ENCODE measurements at regions of chr6 and their contacts with region 1.

Region 1: GRCh38 chr6:2988426-2989331 is 11.0 kb upstream of the NQO2 start:
- DNase-seq: peak; percentile 76 to 78 (median 77)
- H3K4me3 ChIP-seq: peak overlapping the region; percentile 52 to 66
- H3K4me3 Mint-ChIP-seq: peak overlapping the region; percentile 92 to 98 (median 98)
- H3K27ac ChIP-seq: peak overlapping the region; percentile 92
- H3K27ac Mint-ChIP-seq: peak overlapping the region; percentile 99 to 100 (median 100)
- H3K4me1 ChIP-seq: peaks cover 26% of the 10 kb centered on the region
- H3K4me1 Mint-ChIP-seq: peaks cover 19 to 37% (median 27%) of the 10 kb centered on the region in 4 donors
- H3K27me3 ChIP-seq: no peaks in the 10 kb centered on the region
- H3K27me3 Mint-ChIP-seq: no peaks in the 10 kb centered on the region

Region 2: GRCh38 chr6:2841264-2842138 is 147.2 kb before region 1 on chr6 and contains the start of gene SERPINB1:
- CTCF ChIA-PET with region 1: interaction called, 59 read pairs
- POLR2A ChIA-PET with region 1: interaction called, 70 read pairs
- intact Hi-C with region 1: loop called (anchors 1 kb)
- DNase-seq: peak; percentile 64 to 73 (median 68)
- H3K4me3 ChIP-seq: peak within 1 kb of the TSS; percentile 49 to 58
- H3K4me3 Mint-ChIP-seq: peak within 1 kb of the TSS; percentile 89 to 96 (median 93)
- H3K27ac ChIP-seq: peak within 1 kb of the TSS; percentile 73
- H3K27ac Mint-ChIP-seq: peak within 1 kb of the TSS; percentile 93 to 98 (median 95)
- H3K4me1 ChIP-seq: peaks cover 46% of the 10 kb centered on the region
- H3K4me1 Mint-ChIP-seq: peaks cover 39 to 63% (median 51%) of the 10 kb centered on the region in 4 donors
- H3K27me3 ChIP-seq: no peaks in the 10 kb centered on the region
- H3K27me3 Mint-ChIP-seq: no peaks in the 10 kb centered on the region
- total RNA-seq, gene SERPINB1: 56.7 to 58.0 TPM

Region 3: GRCh38 chr6:2911171-2911570 is 77.5 kb before region 1 on chr6:
- CTCF ChIA-PET with region 1: interaction called, 6 read pairs
- POLR2A ChIA-PET with region 1: interaction called, 12 read pairs
- intact Hi-C with region 1: no loop called
- DNase-seq: no peak
- H3K4me3 ChIP-seq: no peak overlapping the region
- H3K4me3 Mint-ChIP-seq: no peak overlapping the region
- H3K27ac ChIP-seq: no peak overlapping the region
- H3K27ac Mint-ChIP-seq: no peak overlapping the region
- H3K4me1 ChIP-seq: peaks cover 6% of the 10 kb centered on the region
- H3K4me1 Mint-ChIP-seq: peaks cover 15 to 31% (median 22%) of the 10 kb centered on the region in 4 donors
- H3K27me3 ChIP-seq: no peaks in the 10 kb centered on the region
- H3K27me3 Mint-ChIP-seq: no peaks in the 10 kb centered on the region

Region 4: DNA sequence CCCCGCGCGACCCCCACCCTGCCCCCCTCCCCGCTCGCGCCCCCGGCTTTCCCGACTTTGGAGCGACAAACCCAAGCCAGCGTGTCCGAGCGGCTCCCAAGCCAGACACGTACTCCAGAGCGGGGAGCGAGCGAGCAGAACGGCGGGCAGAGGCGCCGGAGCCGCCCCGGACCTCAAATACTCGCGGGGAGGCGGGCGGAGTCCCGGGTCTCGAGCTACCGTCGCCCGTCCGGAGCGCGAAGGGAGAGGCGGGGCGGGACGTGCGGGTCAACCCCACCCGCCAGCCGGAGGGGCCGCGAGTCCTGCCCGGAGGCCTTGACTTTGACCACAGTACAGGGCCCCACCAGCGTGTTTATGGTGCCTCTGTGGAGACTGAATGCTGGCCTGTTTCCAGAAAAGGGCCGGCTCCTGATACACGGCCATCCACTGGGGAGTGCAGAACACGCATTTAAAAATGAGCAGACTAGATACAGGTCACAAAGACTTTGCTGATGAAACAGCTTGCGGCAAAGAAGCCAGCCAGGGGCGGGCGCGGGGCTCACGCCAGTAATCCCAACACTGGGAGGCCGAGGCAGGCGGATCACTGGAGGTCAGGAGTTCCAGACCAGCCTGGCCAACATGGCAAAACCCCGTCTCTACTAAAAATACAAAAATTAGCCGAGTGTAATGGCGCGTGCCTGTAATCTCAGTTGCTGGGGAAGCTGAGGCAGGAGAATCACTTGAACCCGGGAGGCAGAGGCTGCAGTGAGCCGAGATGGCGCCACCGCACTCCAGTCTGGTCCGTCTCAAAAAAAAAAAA is 17.1 kb before region 1 on chr6 and contains the start of gene SERPINB6:
- CTCF ChIA-PET with region 1: interaction called, 4 read pairs
- POLR2A ChIA-PET with region 1: interaction called, 27 read pairs
- intact Hi-C with region 1: loop called (anchors 1 kb)
- DNase-seq: peak; percentile 42 to 50 (median 49)
- H3K4me3 ChIP-seq: peak within 1 kb of the TSS in 1 of 2 donors; percentile 60
- H3K4me3 Mint-ChIP-seq: peak within 1 kb of the TSS; percentile 87 to 93 (median 90)
- H3K27ac ChIP-seq: peak within 1 kb of the TSS; percentile 55
- H3K27ac Mint-ChIP-seq: peak within 1 kb of the TSS; percentile 85 to 96 (median 91)
- H3K4me1 ChIP-seq: peaks cover 16% of the 10 kb centered on the region
- H3K4me1 Mint-ChIP-seq: peaks cover 25 to 44% (median 29%) of the 10 kb centered on the region in 4 donors
- H3K27me3 ChIP-seq: no peaks in the 10 kb centered on the region
- H3K27me3 Mint-ChIP-seq: peaks cover 1 to 2% of the 10 kb centered on the region in 2 donors
- total RNA-seq, gene SERPINB6: 41.2 to 41.9 TPM

Region 5: DNA sequence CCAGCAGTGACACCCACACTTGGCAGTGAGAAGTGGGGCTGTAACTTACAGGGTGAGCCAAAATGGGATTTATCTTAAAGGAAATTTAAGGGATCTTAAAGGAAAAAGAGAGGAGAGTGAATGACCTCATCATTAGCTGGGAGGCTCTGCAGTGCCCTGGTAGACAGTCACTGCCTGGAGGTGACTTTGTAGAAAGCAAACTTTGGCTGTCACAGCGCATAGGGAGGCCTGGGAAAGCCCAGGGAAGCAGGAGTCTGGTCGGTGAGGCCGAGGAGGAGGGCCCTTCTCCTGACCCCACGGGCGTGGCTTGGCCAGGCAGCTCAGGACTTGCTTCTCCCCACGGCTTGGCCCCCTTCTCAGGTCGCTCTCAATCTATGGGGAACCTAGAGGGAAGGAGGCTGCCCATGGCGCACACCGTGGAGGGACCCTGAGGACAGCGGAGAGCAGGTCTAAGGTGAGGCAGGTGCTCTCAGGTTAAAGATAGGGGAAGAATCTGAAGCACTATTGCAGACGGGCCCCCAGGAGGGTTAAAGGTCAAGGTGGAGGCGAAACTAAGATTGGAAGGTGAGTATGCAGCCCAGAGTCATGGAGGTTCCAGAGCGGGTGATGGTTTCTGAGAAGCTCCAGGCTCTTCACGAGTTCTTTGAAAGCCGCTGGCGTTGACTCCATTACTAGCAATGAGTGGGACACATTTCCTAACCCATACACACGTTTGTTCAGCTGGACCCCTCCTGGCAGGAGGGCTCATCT is 64.0 kb after region 1 on chr6:
- CTCF ChIA-PET with region 1: interaction called, 8 read pairs
- POLR2A ChIA-PET with region 1: interaction called, 39 read pairs
- intact Hi-C with region 1: no loop called
- DNase-seq: no peak
- H3K4me3 ChIP-seq: peak overlapping the region in 1 of 2 donors; percentile 61
- H3K4me3 Mint-ChIP-seq: peak overlapping the region; percentile 53 to 86 (median 78)
- H3K27ac ChIP-seq: peak overlapping the region; percentile 44
- H3K27ac Mint-ChIP-seq: peak overlapping the region in 6 of 7 donors; percentile 65 to 85 (median 80)
- H3K4me1 ChIP-seq: peaks cover 13% of the 10 kb centered on the region
- H3K4me1 Mint-ChIP-seq: peaks cover 6 to 32% (median 16%) of the 10 kb centered on the region in 4 donors
- H3K27me3 ChIP-seq: no peaks in the 10 kb centered on the region
- H3K27me3 Mint-ChIP-seq: no peaks in the 10 kb centered on the region

Region 6: GRCh38 chr6:3157131-3157927 is 168.7 kb after region 1 on chr6 and contains the start of gene TUBB2A:
- CTCF ChIA-PET with region 1: interaction called, 6 read pairs
- POLR2A ChIA-PET with region 1: interaction called, 10 read pairs
- intact Hi-C with region 1: no loop called
- DNase-seq: peak; percentile 83 to 95 (median 91)
- H3K4me3 ChIP-seq: peak within 1 kb of the TSS; percentile 49 to 81
- H3K4me3 Mint-ChIP-seq: peak within 1 kb of the TSS; percentile 88 to 95 (median 92)
- H3K27ac ChIP-seq: peak within 1 kb of the TSS; percentile 81
- H3K27ac Mint-ChIP-seq: peak within 1 kb of the TSS; percentile 86 to 97 (median 94)
- H3K4me1 ChIP-seq: peaks cover 30% of the 10 kb centered on the region
- H3K4me1 Mint-ChIP-seq: peaks cover 21 to 44% (median 32%) of the 10 kb centered on the region in 4 donors
- H3K27me3 ChIP-seq: no peaks in the 10 kb centered on the region
- H3K27me3 Mint-ChIP-seq: no peaks in the 10 kb centered on the region
- total RNA-seq, gene TUBB2A: 5.2 to 5.4 TPM

Region 7: DNA sequence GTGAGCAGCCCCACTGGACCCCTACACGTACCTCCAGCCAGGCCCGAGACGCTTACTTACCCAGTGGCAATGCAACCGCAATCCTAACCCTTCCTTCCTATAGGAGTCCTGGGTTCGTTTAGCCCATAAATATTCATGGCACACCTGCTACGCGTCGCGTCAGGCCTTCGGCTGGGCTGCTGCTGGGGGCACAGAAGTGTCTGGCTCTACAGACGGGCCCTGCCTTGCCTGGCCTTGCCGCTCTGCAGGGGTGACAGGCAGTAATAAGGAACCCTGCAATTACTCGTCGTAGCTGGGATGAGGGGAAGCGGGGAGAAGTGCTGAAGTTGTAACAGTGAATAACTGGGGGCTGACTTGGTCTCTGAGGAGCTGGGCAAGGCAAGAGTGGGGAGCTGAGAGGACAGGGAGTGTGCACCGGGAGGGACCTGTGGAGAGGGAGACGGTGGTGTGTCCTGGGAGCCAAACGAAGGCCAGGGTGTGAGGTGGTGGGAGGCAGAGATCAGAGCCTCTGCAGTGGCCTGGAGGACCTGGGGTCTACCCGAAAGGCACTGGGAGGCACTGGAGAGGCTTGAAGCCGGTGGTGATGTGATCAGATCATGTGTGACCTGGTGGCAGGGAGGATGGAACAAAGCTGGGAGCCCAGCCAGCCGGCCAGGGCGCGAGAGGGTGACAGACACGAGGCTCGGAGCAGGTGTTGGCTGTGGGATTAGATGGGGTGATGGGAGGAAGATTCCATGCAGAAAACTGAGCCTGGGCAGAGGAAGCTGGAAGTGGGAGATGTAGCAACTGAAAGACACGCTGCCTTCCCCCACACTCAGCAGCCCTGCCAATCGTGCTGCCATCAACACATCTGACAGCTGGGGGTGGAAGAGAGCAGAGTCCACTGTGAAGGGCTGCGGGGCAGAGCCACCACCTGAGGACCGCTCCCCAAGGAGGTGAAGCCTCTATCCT is 306.5 kb after region 1 on chr6:
- CTCF ChIA-PET with region 1: no interaction called
- POLR2A ChIA-PET with region 1: no interaction called
- intact Hi-C with region 1: no loop called
- DNase-seq: no peak
- H3K4me3 ChIP-seq: no peak overlapping the region
- H3K4me3 Mint-ChIP-seq: no peak overlapping the region
- H3K27ac ChIP-seq: no peak overlapping the region
- H3K27ac Mint-ChIP-seq: no peak overlapping the region
- H3K4me1 ChIP-seq: no peaks in the 10 kb centered on the region
- H3K4me1 Mint-ChIP-seq: no peaks in the 10 kb centered on the region
- H3K27me3 ChIP-seq: no peaks in the 10 kb centered on the region
- H3K27me3 Mint-ChIP-seq: no peaks in the 10 kb centered on the region

Region 8: GRCh38 chr6:4135665-4136353 is 1147.1 kb after region 1 on chr6:
- CTCF ChIA-PET with region 1: no interaction called
- POLR2A ChIA-PET with region 1: interaction called, 3 read pairs
- intact Hi-C with region 1: loop called (anchors 5 kb)
- DNase-seq: peak; percentile 86 to 93 (median 87)
- H3K4me3 ChIP-seq: peak overlapping the region; percentile 43 to 72
- H3K4me3 Mint-ChIP-seq: peak overlapping the region; percentile 83 to 94 (median 88)
- H3K27ac ChIP-seq: peak overlapping the region; percentile 51
- H3K27ac Mint-ChIP-seq: peak overlapping the region; percentile 71 to 93 (median 92)
- H3K4me1 ChIP-seq: peaks cover 28% of the 10 kb centered on the region
- H3K4me1 Mint-ChIP-seq: peaks cover 21 to 50% (median 36%) of the 10 kb centered on the region in 4 donors
- H3K27me3 ChIP-seq: no peaks in the 10 kb centered on the region
- H3K27me3 Mint-ChIP-seq: no peaks in the 10 kb centered on the region

Measured in CD4-positive, alpha-beta memory T cell (primary cell).